Activated CD4-positive, alpha-beta T cell treated with anti-CD3 and anti-CD28 coated beads, Interleukin-2, amount 10 ng/mL, durations not matched to agents 7 days and 5 days (primary cell): ENCODE measurements at regions of chr2 and their contacts with region 1.

Region 1: GRCh38 chr2:239344857-239345216 is 56.0 kb downstream of the HDAC4 start:
- DNase-seq: no peak
- H3K4me3 Mint-ChIP-seq: no peak overlapping the region
- H3K27ac Mint-ChIP-seq: no peak overlapping the region
- H3K4me1 Mint-ChIP-seq: peaks cover 14% of the 10 kb centered on the region
- H3K27me3 Mint-ChIP-seq: no peaks in the 10 kb centered on the region

Region 2: DNA sequence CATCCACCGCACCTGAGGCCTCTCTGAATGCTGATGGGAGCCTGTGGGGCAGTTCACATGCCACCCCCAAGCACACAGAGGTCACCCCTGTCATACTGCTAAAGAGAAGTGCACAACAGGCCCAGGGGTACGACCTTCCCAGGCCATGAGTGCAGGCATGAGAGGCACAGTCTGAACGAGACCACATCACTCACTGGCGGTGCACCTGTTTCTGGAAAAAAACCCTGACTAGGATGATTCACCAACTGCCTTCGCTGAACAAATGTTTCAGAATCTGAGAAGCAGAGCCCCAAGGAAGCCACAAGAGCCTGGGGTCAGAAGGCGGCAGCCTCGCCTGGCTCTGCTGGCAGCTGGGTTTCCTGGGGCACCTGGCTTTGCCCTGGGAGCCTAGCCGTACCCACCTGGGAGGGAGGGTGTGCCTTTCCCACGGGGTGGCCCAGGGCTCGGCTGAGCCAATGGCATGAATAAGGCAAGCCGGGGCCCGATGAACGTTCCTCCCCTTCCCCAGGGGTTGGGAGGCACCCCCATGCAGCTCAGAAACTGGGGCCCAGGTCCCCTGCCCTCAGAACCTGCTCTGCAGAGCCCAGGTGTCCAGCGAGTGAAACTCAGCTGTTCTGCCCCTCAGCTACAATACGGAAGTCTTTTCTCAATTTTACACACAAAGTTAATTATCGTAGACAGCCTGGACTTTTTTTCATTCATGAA is 17.9 kb before region 1 on chr2:
- CTCF ChIA-PET with region 1: interaction called, 10 read pairs
- POLR2A ChIA-PET with region 1: no interaction called
- DNase-seq: peak; percentile 85
- H3K4me3 Mint-ChIP-seq: peak overlapping the region; percentile 50
- H3K27ac Mint-ChIP-seq: peak overlapping the region; percentile 86
- H3K4me1 Mint-ChIP-seq: peaks cover 90% of the 10 kb centered on the region
- H3K27me3 Mint-ChIP-seq: no peaks in the 10 kb centered on the region